Transverse colon (tissue), 4 donors: ENCODE measurements at regions of chr10 and their contacts with region 1.

Region 1: DNA sequence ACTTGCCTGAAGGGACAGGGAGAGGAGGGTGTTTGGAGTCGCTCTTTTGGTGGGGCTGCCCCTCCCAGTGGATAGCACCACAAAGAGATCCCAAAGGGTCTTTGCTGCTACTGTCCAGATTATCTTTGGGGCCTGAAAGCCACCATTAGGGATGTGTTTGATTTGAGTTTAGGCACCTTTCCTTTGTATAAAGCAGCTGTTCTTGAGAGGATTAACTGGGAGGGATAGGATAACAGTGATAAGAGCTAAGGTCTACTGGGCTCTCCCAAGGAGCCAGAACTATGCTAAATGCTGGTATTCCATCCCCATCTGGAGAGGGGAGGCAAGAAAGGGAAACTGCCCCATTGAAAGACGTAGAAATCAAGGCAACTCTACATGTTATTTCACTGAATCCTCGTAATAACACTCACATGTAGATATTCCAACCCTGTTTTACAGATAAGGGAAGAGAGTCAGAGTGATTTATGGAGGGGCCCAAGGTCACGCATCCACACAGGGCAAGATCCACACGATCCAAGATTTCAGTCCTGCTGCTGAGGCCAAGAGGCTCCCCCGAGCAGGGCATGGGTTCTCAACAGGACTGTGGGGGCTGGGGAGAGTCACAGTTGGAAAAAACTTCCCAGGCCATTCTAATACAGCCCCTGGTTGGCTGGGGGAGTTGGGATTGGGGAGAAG is 11.1 kb upstream of the TCF7L2 start:
- DNase-seq: no peak
- H3K4me3 ChIP-seq: no peak overlapping the region
- H3K27ac ChIP-seq: no peak overlapping the region
- H3K4me1 ChIP-seq: no peaks in the 10 kb centered on the region
- H3K27me3 ChIP-seq: no peaks in the 10 kb centered on the region
- CTCF ChIP-seq: no peak
- EP300 ChIP-seq: no peak
- POLR2A ChIP-seq: no peak

Region 2: DNA sequence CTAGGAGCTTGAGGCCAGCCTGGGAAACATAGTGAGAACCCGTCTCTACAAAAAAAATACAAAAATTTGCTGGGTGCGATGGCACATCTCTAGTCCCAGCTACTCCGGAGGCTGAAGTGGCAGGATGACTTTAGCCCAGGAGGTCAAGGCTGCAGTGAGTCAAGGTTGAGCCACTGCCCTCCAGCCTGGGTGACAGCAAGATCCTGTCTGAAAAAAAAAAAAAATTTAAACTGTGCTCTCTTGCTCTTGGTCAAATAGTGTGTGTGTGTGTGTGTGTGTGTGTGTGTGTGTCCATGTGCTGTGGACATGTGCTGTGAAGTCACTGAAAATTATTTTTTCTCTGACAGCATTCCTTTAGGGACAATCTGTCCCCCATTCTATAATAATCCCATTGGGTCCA is 51.0 kb before region 1 on chr10:
- in situ Hi-C with region 1: no loop called
- intact Hi-C with region 1: loop called (anchors 1 kb)
- DNase-seq: no peak
- H3K4me3 ChIP-seq: no peak overlapping the region
- H3K27ac ChIP-seq: no peak overlapping the region
- H3K4me1 ChIP-seq: no peaks in the 10 kb centered on the region
- H3K27me3 ChIP-seq: no peaks in the 10 kb centered on the region
- CTCF ChIP-seq: no peak
- EP300 ChIP-seq: no peak
- POLR2A ChIP-seq: no peak

Region 3: GRCh38 chr10:113410618-113411017 is 471.7 kb after region 1 on chr10:
- in situ Hi-C with region 1: no loop called
- intact Hi-C with region 1: no loop called
- DNase-seq: no peak
- H3K4me3 ChIP-seq: no peak overlapping the region
- H3K27ac ChIP-seq: no peak overlapping the region
- H3K4me1 ChIP-seq: no peaks in the 10 kb centered on the region
- H3K27me3 ChIP-seq: peaks cover 8% of the 10 kb centered on the region
- CTCF ChIP-seq: no peak
- EP300 ChIP-seq: no peak
- POLR2A ChIP-seq: no peak